ENCODE measurements at regions of chr9 and their contacts with region 1.

Region 1: DNA sequence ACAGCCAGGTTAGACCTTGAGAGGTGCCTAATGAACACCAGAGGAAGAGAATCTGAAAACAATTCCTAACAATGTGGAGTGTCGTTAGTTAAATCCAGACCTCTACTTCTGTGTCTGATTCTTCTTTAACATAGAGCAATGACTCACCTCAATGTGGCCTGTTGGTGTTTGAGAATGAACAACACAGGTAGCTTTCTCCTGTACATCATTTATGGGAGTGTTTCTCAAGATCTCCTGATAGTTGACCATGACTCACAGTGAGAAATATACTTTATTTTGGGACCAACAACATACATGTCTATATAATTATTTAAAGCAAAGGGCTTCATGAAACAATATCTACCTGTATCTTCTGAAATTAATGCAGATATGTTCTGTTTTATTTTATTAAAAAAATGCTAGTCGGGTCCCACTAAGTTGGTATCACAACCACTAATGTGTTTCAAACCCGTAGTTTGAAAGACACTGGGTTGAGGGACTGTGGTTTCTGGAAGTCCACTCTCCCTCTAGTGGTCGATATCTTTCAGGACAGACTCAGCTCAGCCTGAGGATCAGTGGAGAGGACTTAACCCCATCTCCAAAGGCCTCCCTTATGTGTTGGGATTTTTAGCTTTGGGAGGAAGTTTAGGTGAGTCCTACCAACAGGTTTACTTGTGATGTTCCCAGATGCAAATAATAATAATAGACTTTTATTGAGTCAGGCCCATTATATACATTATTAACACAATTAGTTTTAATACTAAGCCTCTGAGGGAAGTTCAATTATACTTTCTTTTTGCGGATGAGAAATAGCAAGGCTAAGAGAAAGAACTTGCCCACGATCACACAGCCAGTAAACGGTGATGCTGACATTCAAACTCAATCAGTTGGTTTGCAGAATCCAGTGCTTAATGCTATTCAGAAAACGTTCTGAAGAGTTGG is 70.0 kb upstream of the KLF9 start:
- DNase-seq: peak in 2 of 5 donors; percentile 48 to 56
- ATAC-seq: peak; percentile 45 to 74 (median 69)
- H3K4me3 ChIP-seq: no peak overlapping the region
- H3K27ac ChIP-seq: peak overlapping the region; percentile 14 to 95 (median 72)
- H3K4me1 ChIP-seq: peaks cover 30 to 83% (median 62%) of the 10 kb centered on the region in 12 donors
- H3K27me3 ChIP-seq: no peaks in the 10 kb centered on the region
- CTCF ChIP-seq: peak; percentile 59 to 88 (median 79)
- POLR2A ChIP-seq: no peak

Region 2: DNA sequence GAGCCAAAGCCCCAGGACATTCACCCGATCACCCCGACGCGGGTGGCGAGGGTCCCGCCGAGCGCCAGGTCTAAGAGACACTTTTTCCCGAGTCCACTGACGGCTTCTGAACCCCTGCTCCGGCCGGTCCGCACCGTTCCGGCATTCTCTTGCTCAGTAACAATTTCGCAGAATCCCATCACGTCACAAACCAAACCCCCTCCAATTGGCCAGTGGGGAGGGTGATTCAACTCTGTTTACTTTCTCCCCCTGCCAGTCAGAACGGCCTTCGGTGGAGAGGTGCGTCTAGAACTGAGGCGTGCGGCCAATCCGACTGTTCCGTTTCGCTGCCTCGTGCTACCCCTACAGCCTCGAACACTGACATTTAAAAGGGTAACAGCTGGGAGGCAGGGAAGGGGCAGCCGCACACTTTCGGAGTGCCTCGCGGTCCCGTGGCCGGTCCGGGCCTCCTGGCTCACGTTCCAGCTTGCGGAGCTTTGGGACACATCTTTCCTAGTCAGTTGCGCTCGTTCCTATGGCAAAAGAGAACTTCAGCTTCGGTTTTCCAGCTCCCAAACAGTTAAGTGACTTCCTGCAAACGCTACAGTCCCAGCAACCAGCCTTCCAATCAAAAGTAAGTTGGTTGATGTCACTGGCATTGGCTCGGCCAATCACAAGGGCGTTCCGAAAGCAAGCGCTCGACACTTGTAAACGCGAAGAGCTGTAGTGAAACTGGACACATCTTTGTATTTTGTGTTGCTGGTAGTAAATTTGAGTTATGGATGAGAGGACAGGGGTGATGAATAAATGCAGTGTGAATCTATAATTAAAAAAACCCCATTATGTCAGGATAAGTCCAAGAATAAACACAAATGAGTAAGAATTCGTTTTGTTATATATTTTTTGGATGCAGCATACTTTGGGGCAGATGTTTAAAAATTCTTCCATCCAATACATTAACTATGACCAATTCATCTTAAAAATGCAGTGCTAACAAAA is 70.4 kb before region 1 on chr9 and contains the start of gene KLF9:
- intact Hi-C with region 1: loop called in 3 of 10 experiments (anchors 1 to 5 kb)
- DNase-seq: peak; percentile 93 to 97 (median 95)
- ATAC-seq: peak; percentile 77 to 82 (median 80)
- H3K4me3 ChIP-seq: peak within 1 kb of the TSS; percentile 76 to 99 (median 90)
- H3K27ac ChIP-seq: peak within 1 kb of the TSS; percentile 98 to 100 (median 100)
- H3K4me1 ChIP-seq: peaks cover 10 to 64% (median 53%) of the 10 kb centered on the region in 12 donors
- H3K27me3 ChIP-seq: no peaks in the 10 kb centered on the region
- CTCF ChIP-seq: no peak
- POLR2A ChIP-seq: peak; percentile 48 to 97
- total RNA-seq, gene KLF9: 28.7 to 74.8 (median 46.0) TPM

Region 3: DNA sequence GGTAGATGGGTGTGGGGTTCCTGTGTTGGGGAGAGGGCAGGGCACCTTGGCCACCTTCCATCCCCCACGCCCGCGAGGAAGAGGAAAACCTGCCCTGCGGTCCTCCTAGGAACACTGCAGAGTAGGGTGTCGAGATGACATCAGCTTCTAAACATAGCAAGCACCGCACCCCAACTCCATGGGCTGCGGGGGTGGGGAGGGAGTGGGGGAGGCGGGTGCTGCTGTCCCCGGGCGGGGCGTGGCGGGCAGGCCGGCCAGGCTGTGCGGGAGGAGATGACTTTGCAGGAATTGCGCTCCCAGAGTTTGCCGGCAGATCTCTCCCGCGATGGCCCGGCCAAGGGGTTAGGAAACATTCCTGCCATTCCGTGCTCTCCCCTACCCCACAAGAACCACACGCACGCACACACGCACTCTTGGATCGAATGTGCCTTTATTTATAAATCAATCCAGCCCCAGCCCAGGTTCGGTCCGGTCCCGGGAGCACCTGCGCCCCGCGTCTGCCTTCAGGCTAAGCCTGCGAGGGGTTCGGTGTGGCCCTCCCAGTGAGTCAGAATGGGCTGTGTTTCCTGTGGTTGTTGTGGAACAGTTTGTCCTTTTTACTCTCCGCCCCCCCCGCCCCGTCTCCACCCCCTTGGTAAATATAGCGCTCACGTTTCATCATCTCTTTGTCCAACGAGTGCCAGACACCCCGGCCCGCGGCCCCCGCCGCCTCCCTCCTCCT is 64.8 kb before region 1 on chr9:
- intact Hi-C with region 1: loop called (anchors 1 to 5 kb)
- DNase-seq: peak; percentile 96 to 98 (median 96)
- ATAC-seq: peak; percentile 51 to 76 (median 74)
- H3K4me3 ChIP-seq: peak overlapping the region; percentile 19 to 81 (median 58)
- H3K27ac ChIP-seq: peak overlapping the region; percentile 98 to 100 (median 100)
- H3K4me1 ChIP-seq: peaks cover 24 to 67% (median 53%) of the 10 kb centered on the region in 12 donors
- H3K27me3 ChIP-seq: no peaks in the 10 kb centered on the region
- CTCF ChIP-seq: peak in 2 of 12 donors; percentile 17 to 36
- POLR2A ChIP-seq: peak in 1 of 2 donors; percentile 77

Region 4: GRCh38 chr9:70427161-70427945 is 57.1 kb before region 1 on chr9:
- intact Hi-C with region 1: loop called in 2 of 10 experiments (anchors 5 kb)
- DNase-seq: no peak
- ATAC-seq: no peak
- H3K4me3 ChIP-seq: no peak overlapping the region
- H3K27ac ChIP-seq: peak overlapping the region in 1 of 12 donors; percentile 53
- H3K4me1 ChIP-seq: peaks cover 0 to 8% (median 5%) of the 10 kb centered on the region in 12 donors
- H3K27me3 ChIP-seq: no peaks in the 10 kb centered on the region
- CTCF ChIP-seq: no peak
- POLR2A ChIP-seq: no peak

Region 5: DNA sequence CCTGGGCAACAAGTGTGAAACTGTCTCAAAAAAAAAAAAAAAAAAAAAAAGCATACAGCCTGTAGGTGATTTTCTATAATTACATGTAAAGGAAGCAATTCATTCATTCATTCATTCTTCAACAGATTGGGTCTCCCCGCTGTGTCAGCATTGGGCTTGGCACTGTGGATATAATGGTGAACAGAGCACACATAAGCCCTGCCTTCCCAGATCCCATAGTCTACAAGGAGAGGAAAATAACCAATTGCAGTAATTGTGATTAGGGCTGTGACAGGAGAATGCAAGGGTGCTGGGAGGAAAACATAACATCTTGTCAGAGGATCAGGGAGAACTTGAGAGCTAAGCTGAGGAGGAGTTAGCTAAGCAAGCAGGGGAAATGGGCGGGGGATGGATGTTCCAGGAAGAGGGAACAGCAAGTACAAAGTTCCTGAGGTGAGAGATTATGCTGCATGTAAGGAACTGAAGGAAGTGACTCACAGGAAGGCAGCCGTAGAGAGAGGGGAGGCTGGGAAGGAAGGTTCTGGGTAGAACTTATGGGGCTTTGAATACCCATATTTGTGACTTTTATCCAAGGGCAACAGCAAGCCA is 46.0 kb before region 1 on chr9:
- intact Hi-C with region 1: loop called in 1 of 10 experiments (anchors 5 kb)
- DNase-seq: peak; percentile 61 to 86 (median 63)
- ATAC-seq: peak; percentile 86 to 97 (median 92)
- H3K4me3 ChIP-seq: no peak overlapping the region
- H3K27ac ChIP-seq: peak overlapping the region; percentile 21 to 78 (median 71)
- H3K4me1 ChIP-seq: peaks cover 0 to 47% (median 25%) of the 10 kb centered on the region in 12 donors
- H3K27me3 ChIP-seq: no peaks in the 10 kb centered on the region
- CTCF ChIP-seq: no peak
- POLR2A ChIP-seq: no peak

Region 6: DNA sequence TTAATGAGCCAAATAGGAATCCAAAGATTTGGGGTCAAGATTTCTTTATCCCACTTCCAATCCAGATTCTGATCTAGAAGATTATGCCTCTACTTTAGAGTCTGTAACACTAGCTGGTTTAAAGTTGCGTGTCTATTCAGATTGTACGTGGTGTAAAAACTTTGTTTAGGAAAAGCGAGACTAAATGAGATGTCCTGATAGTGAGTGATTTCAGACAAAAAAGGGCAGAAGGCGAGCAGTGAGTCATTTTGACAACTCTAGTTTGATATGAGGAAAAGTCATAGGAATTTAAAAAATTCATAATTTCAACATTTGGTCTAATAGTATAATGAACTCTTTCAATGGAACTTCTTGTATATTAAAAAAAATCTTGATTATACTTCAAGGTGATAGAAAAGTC is 49.6 kb after region 1 on chr9:
- intact Hi-C with region 1: no loop called
- DNase-seq: no peak
- ATAC-seq: no peak
- H3K4me3 ChIP-seq: no peak overlapping the region
- H3K27ac ChIP-seq: no peak overlapping the region
- H3K4me1 ChIP-seq: peaks cover 0 to 5% (median 0%) of the 10 kb centered on the region in 12 donors
- H3K27me3 ChIP-seq: no peaks in the 10 kb centered on the region
- CTCF ChIP-seq: no peak
- POLR2A ChIP-seq: no peak

Measured in heart left ventricle (tissue), 16 donors.